CD8-positive, alpha-beta memory T cell (primary cell): ENCODE measurements at regions of chr5 and their contacts with region 1.

Region 1: DNA sequence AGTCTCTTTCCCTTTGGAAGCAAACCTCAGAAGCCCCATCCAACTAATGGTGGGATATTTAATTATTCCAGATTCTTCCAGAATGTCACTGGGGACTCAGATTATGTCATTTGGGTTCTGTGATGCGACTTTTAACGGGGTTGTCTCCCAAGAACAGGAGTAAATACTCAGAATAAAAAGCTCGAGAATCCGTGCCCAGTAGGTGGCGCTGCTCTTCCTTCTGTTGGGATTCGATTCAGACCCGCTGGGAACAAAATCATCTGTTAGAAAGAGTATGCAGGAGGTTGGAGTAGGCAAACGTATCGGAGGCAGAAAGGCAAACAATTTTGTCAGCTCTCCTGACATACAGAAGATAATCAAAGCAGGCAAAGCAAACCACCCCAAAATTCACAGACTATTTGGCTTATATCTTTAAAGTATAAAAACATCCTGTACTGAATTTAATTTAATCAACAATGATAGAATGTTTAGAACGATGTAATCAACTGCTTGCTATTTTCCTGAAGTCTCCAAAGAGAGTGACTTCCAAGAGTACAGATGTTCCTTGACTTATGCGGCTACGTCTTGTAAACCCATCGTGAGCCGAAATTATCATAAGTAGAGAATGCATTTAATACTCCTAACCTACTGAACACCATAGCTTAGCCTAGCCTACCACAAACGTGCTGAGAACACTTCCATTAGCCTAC is 169.8 kb upstream of the RAI14 start:
- DNase-seq: peak; percentile 21 to 69 (median 27)
- H3K4me3 ChIP-seq: no peak overlapping the region
- H3K4me3 Mint-ChIP-seq: no peak overlapping the region
- H3K27ac ChIP-seq: no peak overlapping the region
- H3K27ac Mint-ChIP-seq: peak overlapping the region in 1 of 8 donors; percentile 9
- H3K4me1 ChIP-seq: no peaks in the 10 kb centered on the region
- H3K4me1 Mint-ChIP-seq: peaks cover 2 to 5% (median 4%) of the 10 kb centered on the region in 3 donors
- H3K27me3 ChIP-seq: peaks cover 3% of the 10 kb centered on the region
- H3K27me3 Mint-ChIP-seq: peaks cover 8 to 34% of the 10 kb centered on the region in 2 donors

Region 2: GRCh38 chr5:34007621-34008600 is 478.4 kb before region 1 on chr5 and contains the start of gene AMACR:
- CTCF ChIA-PET with region 1: no interaction called
- POLR2A ChIA-PET with region 1: no interaction called
- DNase-seq: peak; percentile 72 to 92 (median 84)
- H3K4me3 ChIP-seq: peak within 1 kb of the TSS; percentile 98
- H3K4me3 Mint-ChIP-seq: peak within 1 kb of the TSS; percentile 96 to 99 (median 96)
- H3K27ac ChIP-seq: peak within 1 kb of the TSS; percentile 83
- H3K27ac Mint-ChIP-seq: peak within 1 kb of the TSS; percentile 87 to 98 (median 94)
- H3K4me1 ChIP-seq: peaks cover 13% of the 10 kb centered on the region
- H3K4me1 Mint-ChIP-seq: peaks cover 24 to 35% (median 28%) of the 10 kb centered on the region in 3 donors
- H3K27me3 ChIP-seq: no peaks in the 10 kb centered on the region
- H3K27me3 Mint-ChIP-seq: no peaks in the 10 kb centered on the region
- total RNA-seq, gene AMACR: 11.3 to 12.8 TPM

Region 3: GRCh38 chr5:34475249-34475966 is 10.9 kb before region 1 on chr5:
- CTCF ChIA-PET with region 1: interaction called, 13 read pairs
- POLR2A ChIA-PET with region 1: no interaction called
- DNase-seq: no peak
- H3K4me3 ChIP-seq: no peak overlapping the region
- H3K4me3 Mint-ChIP-seq: no peak overlapping the region
- H3K27ac ChIP-seq: no peak overlapping the region
- H3K27ac Mint-ChIP-seq: no peak overlapping the region
- H3K4me1 ChIP-seq: no peaks in the 10 kb centered on the region
- H3K4me1 Mint-ChIP-seq: peaks cover 0 to 5% (median 4%) of the 10 kb centered on the region in 3 donors
- H3K27me3 ChIP-seq: no peaks in the 10 kb centered on the region
- H3K27me3 Mint-ChIP-seq: peaks cover 13 to 38% of the 10 kb centered on the region in 2 donors

Region 4: GRCh38 chr5:34522599-34523386 is 36.5 kb after region 1 on chr5:
- CTCF ChIA-PET with region 1: no interaction called
- POLR2A ChIA-PET with region 1: no interaction called
- DNase-seq: peak; percentile 9 to 63 (median 23)
- H3K4me3 ChIP-seq: no peak overlapping the region
- H3K4me3 Mint-ChIP-seq: no peak overlapping the region
- H3K27ac ChIP-seq: no peak overlapping the region
- H3K27ac Mint-ChIP-seq: no peak overlapping the region
- H3K4me1 ChIP-seq: no peaks in the 10 kb centered on the region
- H3K4me1 Mint-ChIP-seq: no peaks in the 10 kb centered on the region
- H3K27me3 ChIP-seq: no peaks in the 10 kb centered on the region
- H3K27me3 Mint-ChIP-seq: peaks cover 2 to 14% of the 10 kb centered on the region in 2 donors